Activated CD8-positive, alpha-beta T cell treated with anti-CD3 and anti-CD28 coated beads for 36 hours (primary cell): ENCODE measurements at regions of chrX and their contacts with region 1.

Region 1: GRCh38 chrX:78103623-78104446 is at the start of gene PGK1:
- DNase-seq: peak; percentile 96
- ATAC-seq: peak; percentile 95
- H3K4me3 Mint-ChIP-seq: peak within 1 kb of the TSS; percentile 96
- H3K27ac Mint-ChIP-seq: peak within 1 kb of the TSS; percentile 94
- H3K4me1 Mint-ChIP-seq: peaks cover 30% of the 10 kb centered on the region
- H3K27me3 Mint-ChIP-seq: no peaks in the 10 kb centered on the region
- CTCF ChIP-seq: no peak
- total RNA-seq, gene PGK1: 1,745 to 1,759 TPM

Region 2: GRCh38 chrX:77675986-77676385 is 427.8 kb before region 1 on chrX:
- CTCF ChIA-PET with region 1: no interaction called
- POLR2A ChIA-PET with region 1: no interaction called
- intact Hi-C with region 1: no loop called
- DNase-seq: no peak
- ATAC-seq: no peak
- H3K4me3 Mint-ChIP-seq: no peak overlapping the region
- H3K27ac Mint-ChIP-seq: no peak overlapping the region
- H3K4me1 Mint-ChIP-seq: peaks cover 2% of the 10 kb centered on the region
- H3K27me3 Mint-ChIP-seq: no peaks in the 10 kb centered on the region
- CTCF ChIP-seq: no peak

Region 3: DNA sequence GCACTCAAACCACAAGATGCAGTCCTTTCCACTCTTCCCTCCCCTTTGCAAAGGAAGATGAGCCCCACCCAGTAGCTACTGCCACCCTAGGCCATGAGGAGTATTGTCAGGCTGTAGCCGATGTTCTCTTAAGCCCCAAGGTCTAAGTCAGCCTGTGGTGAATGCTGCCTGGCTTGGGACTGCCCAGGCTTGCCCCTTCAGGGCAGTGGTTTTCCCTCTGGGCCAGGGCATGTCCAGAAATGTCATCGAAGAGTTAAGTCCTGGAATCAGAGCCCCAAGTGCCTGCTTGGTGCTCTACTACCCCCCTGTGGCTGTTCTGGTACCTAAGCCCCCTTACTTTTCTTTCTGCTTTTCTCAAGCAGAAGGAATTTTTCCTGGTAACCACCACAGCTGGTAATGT is 11.5 kb before region 1 on chrX:
- CTCF ChIA-PET with region 1: interaction called, 12 read pairs
- POLR2A ChIA-PET with region 1: no interaction called
- intact Hi-C with region 1: no loop called
- DNase-seq: peak; percentile 34
- ATAC-seq: peak; percentile 91
- H3K4me3 Mint-ChIP-seq: no peak overlapping the region
- H3K27ac Mint-ChIP-seq: peak overlapping the region; percentile 70
- H3K4me1 Mint-ChIP-seq: peaks cover 9% of the 10 kb centered on the region
- H3K27me3 Mint-ChIP-seq: no peaks in the 10 kb centered on the region
- CTCF ChIP-seq: peak; percentile 64

Region 4: GRCh38 chrX:78119521-78120227 is 15.8 kb after region 1 on chrX:
- CTCF ChIA-PET with region 1: interaction called, 4 read pairs
- POLR2A ChIA-PET with region 1: interaction called, 22 read pairs
- intact Hi-C with region 1: no loop called
- DNase-seq: no peak
- ATAC-seq: no peak
- H3K4me3 Mint-ChIP-seq: peak overlapping the region; percentile 15
- H3K27ac Mint-ChIP-seq: peak overlapping the region; percentile 74
- H3K4me1 Mint-ChIP-seq: peaks cover 70% of the 10 kb centered on the region
- H3K27me3 Mint-ChIP-seq: no peaks in the 10 kb centered on the region
- CTCF ChIP-seq: no peak

Region 5: GRCh38 chrX:78129714-78130113 is 25.9 kb after region 1 on chrX:
- CTCF ChIA-PET with region 1: no interaction called
- POLR2A ChIA-PET with region 1: interaction called, 11 read pairs
- intact Hi-C with region 1: no loop called
- DNase-seq: no peak
- ATAC-seq: peak; percentile 22
- H3K4me3 Mint-ChIP-seq: no peak overlapping the region
- H3K27ac Mint-ChIP-seq: peak overlapping the region; percentile 78
- H3K4me1 Mint-ChIP-seq: peaks cover 11% of the 10 kb centered on the region
- H3K27me3 Mint-ChIP-seq: no peaks in the 10 kb centered on the region
- CTCF ChIP-seq: no peak

Region 6: GRCh38 chrX:78199851-78200250 is 96.0 kb after region 1 on chrX:
- CTCF ChIA-PET with region 1: no interaction called
- POLR2A ChIA-PET with region 1: no interaction called
- intact Hi-C with region 1: no loop called
- DNase-seq: peak; percentile 12
- ATAC-seq: no peak
- H3K4me3 Mint-ChIP-seq: no peak overlapping the region
- H3K27ac Mint-ChIP-seq: no peak overlapping the region
- H3K4me1 Mint-ChIP-seq: no peaks in the 10 kb centered on the region
- H3K27me3 Mint-ChIP-seq: no peaks in the 10 kb centered on the region
- CTCF ChIP-seq: peak; percentile 13